AG04449 (cell line): ENCODE measurements at regions of chr2 and their contacts with region 1.

Region 1: GRCh38 chr2:174985630-174986029 is 19.6 kb downstream of the CHN1 start:
- DNase-seq: no peak
- H3K4me3 ChIP-seq: no peak overlapping the region
- CTCF ChIP-seq: peak; percentile 39

Region 2: GRCh38 chr2:174748948-174749347 is 236.7 kb before region 1 on chr2:
- CTCF ChIA-PET with region 1: interaction called, 345 read pairs
- POLR2A ChIA-PET with region 1: no interaction called
- DNase-seq: no peak
- H3K4me3 ChIP-seq: no peak overlapping the region
- CTCF ChIP-seq: peak; percentile 72

Region 3: GRCh38 chr2:174771631-174772471 is 213.8 kb before region 1 on chr2:
- CTCF ChIA-PET with region 1: interaction called, 417 read pairs
- POLR2A ChIA-PET with region 1: interaction called, 3 read pairs
- DNase-seq: no peak
- H3K4me3 ChIP-seq: no peak overlapping the region
- CTCF ChIP-seq: peak; percentile 86

Region 4: GRCh38 chr2:174805803-174806202 is 179.8 kb before region 1 on chr2:
- CTCF ChIA-PET with region 1: interaction called, 15 read pairs
- POLR2A ChIA-PET with region 1: no interaction called
- DNase-seq: no peak
- H3K4me3 ChIP-seq: no peak overlapping the region
- CTCF ChIP-seq: no peak

Region 5: GRCh38 chr2:174836377-174836994 is 149.1 kb before region 1 on chr2:
- CTCF ChIA-PET with region 1: interaction called, 20 read pairs
- POLR2A ChIA-PET with region 1: no interaction called
- DNase-seq: peak; percentile 91
- H3K4me3 ChIP-seq: no peak overlapping the region
- CTCF ChIP-seq: no peak

Region 6: GRCh38 chr2:174888646-174889271 is 96.9 kb before region 1 on chr2:
- CTCF ChIA-PET with region 1: interaction called, 26 read pairs
- POLR2A ChIA-PET with region 1: no interaction called
- DNase-seq: no peak
- H3K4me3 ChIP-seq: no peak overlapping the region
- CTCF ChIP-seq: no peak

Region 7: DNA sequence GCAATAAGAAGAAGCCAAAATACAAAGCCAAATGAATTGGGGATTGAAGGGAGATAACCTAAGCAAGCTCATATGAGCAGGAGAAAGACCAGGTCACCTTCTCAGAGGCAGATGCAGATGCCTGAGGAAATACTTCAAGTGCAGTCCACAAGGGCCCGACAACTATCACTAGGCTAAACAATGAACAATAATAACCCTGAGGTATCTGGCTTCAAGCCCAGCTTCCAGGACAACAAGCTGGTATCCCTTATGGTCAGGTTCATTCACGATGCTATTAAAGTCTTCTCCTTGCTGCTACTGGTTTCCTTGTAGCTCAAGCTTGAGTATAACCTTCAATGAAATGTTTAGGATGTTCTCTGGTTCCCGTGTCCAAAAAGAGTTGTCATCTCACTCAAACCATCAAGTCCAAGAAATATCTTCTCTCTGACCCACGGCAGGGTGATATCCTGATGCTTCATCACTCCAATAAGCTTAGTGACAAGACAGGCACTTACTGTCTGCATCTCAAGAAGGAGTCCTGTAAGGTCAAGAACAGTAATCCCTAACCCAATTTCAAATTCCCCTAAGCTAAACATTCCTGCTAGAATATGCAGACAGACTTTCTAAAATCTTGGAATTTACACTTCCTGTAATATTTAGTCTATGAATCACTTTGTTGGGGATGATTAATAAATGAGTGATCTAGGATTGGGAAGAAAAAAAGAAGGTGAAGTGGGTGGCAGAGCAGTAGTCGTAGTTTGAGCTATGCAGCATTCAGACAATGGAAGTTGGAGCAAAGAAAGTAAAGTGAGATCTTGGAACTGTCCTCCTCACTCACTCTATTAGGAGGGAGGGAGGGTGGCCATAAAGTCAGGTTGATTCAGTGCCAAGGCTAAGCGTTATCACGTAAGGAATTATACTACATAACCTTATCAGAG is 13.5 kb before region 1 on chr2:
- CTCF ChIA-PET with region 1: interaction called, 15 read pairs
- POLR2A ChIA-PET with region 1: interaction called, 5 read pairs
- DNase-seq: no peak
- H3K4me3 ChIP-seq: no peak overlapping the region
- CTCF ChIP-seq: no peak